Activated CD4-positive, alpha-beta T cell treated with anti-CD3 and anti-CD28 coated beads for 36 hours (primary cell): ENCODE measurements at regions of chr16 and their contacts with region 1.

Region 1: GRCh38 chr16:27867122-27868110 is 196.1 kb downstream of the GSG1L start:
- DNase-seq: peak; percentile 85
- ATAC-seq: peak; percentile 94
- H3K4me3 Mint-ChIP-seq: no peak overlapping the region
- H3K27ac Mint-ChIP-seq: no peak overlapping the region
- H3K4me1 Mint-ChIP-seq: peaks cover 2% of the 10 kb centered on the region
- H3K27me3 Mint-ChIP-seq: no peaks in the 10 kb centered on the region

Region 2: DNA sequence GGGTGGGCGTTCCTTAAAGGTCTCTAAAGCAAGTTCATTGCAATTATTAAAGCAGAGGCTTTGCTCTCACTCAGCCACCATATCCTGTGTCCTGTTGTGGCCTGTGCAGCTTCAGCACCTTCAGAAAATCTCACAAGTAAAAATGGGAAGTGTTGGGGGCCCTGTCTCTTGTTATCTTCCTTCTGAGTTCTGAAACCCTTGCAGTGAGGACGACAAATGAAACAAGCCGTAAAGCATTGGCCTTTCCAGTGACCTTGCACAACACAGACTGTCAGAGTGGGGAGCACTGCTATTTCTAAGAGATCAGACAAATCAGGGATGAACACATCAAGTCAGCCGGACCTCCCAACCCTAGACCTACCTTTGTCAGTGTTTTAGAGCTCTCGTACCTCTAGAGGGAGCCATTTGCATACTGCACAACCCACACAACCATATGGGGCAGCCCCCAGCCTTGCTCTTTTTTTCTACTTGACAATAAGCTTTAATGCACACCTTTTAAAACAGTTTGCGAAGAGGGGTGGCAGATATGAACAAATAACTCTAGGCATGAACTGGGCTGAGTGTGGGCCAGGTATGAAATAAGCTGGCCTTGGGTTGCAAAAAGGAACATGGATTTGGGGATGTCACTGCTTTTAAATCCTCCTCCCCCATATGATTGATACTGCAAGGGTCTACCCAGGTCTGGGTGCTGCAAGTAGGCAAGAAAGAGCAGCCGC is 227.7 kb before region 1 on chr16:
- CTCF ChIA-PET with region 1: no interaction called
- POLR2A ChIA-PET with region 1: no interaction called
- intact Hi-C with region 1: loop called (anchors 5 to 10 kb)
- DNase-seq: peak; percentile 57
- ATAC-seq: peak; percentile 83
- H3K4me3 Mint-ChIP-seq: no peak overlapping the region
- H3K27ac Mint-ChIP-seq: no peak overlapping the region
- H3K4me1 Mint-ChIP-seq: no peaks in the 10 kb centered on the region
- H3K27me3 Mint-ChIP-seq: no peaks in the 10 kb centered on the region

Region 3: GRCh38 chr16:27690608-27691007 is 176.8 kb before region 1 on chr16:
- CTCF ChIA-PET with region 1: no interaction called
- POLR2A ChIA-PET with region 1: no interaction called
- intact Hi-C with region 1: loop called in 1 of 2 experiments (anchors 2 kb)
- DNase-seq: peak; percentile 47
- ATAC-seq: no peak
- H3K4me3 Mint-ChIP-seq: no peak overlapping the region
- H3K27ac Mint-ChIP-seq: no peak overlapping the region
- H3K4me1 Mint-ChIP-seq: no peaks in the 10 kb centered on the region
- H3K27me3 Mint-ChIP-seq: no peaks in the 10 kb centered on the region

Region 4: GRCh38 chr16:27951489-27952120 is 84.2 kb after region 1 on chr16:
- CTCF ChIA-PET with region 1: no interaction called
- POLR2A ChIA-PET with region 1: no interaction called
- intact Hi-C with region 1: no loop called
- DNase-seq: no peak
- ATAC-seq: no peak
- H3K4me3 Mint-ChIP-seq: no peak overlapping the region
- H3K27ac Mint-ChIP-seq: no peak overlapping the region
- H3K4me1 Mint-ChIP-seq: no peaks in the 10 kb centered on the region
- H3K27me3 Mint-ChIP-seq: peaks cover 18% of the 10 kb centered on the region